ENCODE measurements at regions of chr11 and their contacts with region 1.

Region 1: GRCh38 chr11:85941380-85941973 is 86.3 kb downstream of the CCDC83 start:
- DNase-seq: peak; percentile 46
- H3K4me3 ChIP-seq: no peak overlapping the region
- H3K27ac ChIP-seq: no peak overlapping the region
- H3K4me1 ChIP-seq: peaks cover 4% of the 10 kb centered on the region
- H3K27me3 ChIP-seq: no peaks in the 10 kb centered on the region
- CTCF ChIP-seq: peak; percentile 57 to 78

Region 2: GRCh38 chr11:86021377-86021776 is 79.9 kb after region 1 on chr11:
- CTCF ChIA-PET with region 1: no interaction called
- dilution Hi-C with region 1: no loop called
- in situ Hi-C with region 1: no loop called
- intact Hi-C with region 1: no loop called
- DNase-seq: no peak
- H3K4me3 ChIP-seq: no peak overlapping the region
- H3K27ac ChIP-seq: no peak overlapping the region
- H3K4me1 ChIP-seq: no peaks in the 10 kb centered on the region
- H3K27me3 ChIP-seq: no peaks in the 10 kb centered on the region
- CTCF ChIP-seq: no peak

Region 3: DNA sequence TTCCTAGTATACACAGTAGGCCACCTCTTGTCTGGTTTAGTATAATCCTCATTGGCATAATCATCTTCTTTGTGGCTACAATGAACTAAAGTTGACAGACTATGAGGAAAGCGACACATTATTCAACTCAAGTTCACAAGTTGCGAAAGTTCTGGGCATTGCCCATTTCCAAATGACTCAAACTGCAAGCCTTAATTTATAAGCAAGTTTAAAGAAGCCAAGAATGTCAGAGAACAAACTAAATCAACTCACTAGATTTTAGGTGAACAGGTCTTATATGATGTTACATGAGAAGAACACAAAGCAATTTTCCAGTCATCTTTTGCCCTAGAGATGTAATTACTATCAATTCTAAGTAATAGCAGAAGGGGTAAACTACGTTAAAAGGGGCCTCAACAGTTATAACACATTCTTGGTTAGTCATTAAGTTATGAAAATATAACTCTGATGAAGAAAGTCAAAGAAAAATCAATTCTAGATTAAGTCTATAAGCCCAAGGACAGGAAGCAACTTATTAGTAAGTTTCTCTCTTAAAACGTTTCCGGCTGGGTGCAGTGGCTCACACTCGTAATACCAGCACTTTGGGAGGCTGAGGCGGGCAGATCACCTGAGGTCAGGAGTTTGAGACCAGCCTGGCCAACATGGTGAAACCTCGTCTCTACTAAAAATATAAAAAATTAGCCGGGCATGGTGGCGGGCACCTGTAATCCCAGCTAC is 106.0 kb after region 1 on chr11:
- CTCF ChIA-PET with region 1: no interaction called
- dilution Hi-C with region 1: no loop called
- in situ Hi-C with region 1: no loop called
- intact Hi-C with region 1: no loop called
- DNase-seq: peak; percentile 78
- H3K4me3 ChIP-seq: no peak overlapping the region
- H3K27ac ChIP-seq: no peak overlapping the region
- H3K4me1 ChIP-seq: peaks cover 34% of the 10 kb centered on the region
- H3K27me3 ChIP-seq: no peaks in the 10 kb centered on the region
- CTCF ChIP-seq: no peak

Region 4: GRCh38 chr11:86218125-86219084 is 276.9 kb after region 1 on chr11:
- CTCF ChIA-PET with region 1: no interaction called
- dilution Hi-C with region 1: no loop called
- in situ Hi-C with region 1: no loop called
- intact Hi-C with region 1: loop called (anchors 1 kb)
- DNase-seq: peak; percentile 55
- H3K4me3 ChIP-seq: peak overlapping the region in 1 of 3 experiments; percentile 4
- H3K27ac ChIP-seq: no peak overlapping the region
- H3K4me1 ChIP-seq: no peaks in the 10 kb centered on the region
- H3K27me3 ChIP-seq: no peaks in the 10 kb centered on the region
- CTCF ChIP-seq: peak; percentile 92 to 95

Region 5: DNA sequence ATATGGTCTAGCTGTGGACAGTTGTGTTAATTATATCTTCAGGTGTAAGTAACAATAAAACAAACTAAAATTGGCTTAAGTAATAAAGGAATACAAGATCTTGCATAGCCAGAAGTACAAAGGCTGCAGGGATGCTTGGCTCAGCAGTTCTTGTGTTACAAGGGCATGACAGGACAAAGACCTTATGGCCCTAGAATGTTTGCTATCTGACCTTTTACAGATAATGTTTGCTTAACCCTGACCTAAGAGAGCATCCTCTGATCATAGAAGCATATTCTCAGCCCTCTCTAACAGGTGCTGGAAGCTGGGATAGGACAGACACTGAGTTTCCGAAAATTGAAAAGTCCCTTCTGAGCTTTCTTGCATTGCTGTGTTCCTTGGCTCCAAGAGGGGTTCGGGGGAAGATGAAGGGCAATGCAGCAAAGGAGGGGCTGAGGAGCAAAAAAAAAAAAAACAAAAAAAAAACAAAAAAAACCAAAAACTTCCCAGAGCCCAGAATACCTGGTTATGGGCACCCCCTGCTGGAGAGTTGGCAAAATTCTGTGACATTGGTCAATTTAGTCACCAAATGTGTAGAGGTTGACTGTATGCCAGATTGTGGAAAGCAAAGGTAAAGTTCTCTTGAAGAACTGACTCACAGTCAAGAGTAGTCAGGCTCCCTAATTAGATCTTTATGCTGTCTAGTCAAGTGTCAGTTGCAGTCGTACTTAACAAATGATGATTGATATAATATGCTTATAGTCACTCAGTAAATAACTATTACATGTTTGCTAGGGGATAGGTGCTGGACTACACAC is 350.2 kb after region 1 on chr11:
- CTCF ChIA-PET with region 1: no interaction called
- dilution Hi-C with region 1: no loop called
- in situ Hi-C with region 1: no loop called
- intact Hi-C with region 1: loop called (anchors 1 kb)
- DNase-seq: peak; percentile 70
- H3K4me3 ChIP-seq: no peak overlapping the region
- H3K27ac ChIP-seq: no peak overlapping the region
- H3K4me1 ChIP-seq: no peaks in the 10 kb centered on the region
- H3K27me3 ChIP-seq: no peaks in the 10 kb centered on the region
- CTCF ChIP-seq: peak; percentile 71 to 79